OCI-LY7 (cell line): ENCODE measurements at regions of chr1 and their contacts with region 1.

Region 1: DNA sequence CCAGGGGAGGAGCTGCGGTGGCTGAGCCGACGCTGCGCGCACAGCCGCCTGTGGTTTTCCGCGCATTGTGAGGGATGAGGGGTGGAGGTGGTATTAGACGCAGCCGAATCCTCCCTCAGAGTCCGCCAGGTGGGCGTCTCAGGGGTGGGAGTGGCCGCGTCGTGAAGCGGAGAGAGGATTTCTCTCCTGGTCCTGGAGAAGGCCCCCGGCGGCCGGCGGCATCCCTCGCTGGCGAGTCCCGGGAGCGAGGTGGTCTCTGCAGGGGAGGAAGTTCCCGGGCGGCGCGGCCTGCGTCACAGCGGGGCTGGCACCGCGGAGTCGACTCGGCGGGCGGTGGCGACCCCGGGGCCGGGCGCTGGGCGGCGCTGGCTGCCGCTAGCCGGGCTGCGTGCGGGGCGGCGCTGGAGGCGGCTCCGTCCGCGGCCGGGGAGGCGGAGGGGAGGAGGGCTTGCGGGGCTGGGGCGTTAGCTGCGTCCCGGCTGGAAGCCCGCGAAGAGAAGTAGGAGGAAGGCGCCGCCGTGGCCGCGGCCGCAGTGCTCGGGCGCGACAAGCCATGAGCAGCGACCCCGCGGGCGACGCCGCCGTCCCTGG is at the start of gene LRRC8C:
- DNase-seq: peak; percentile 86
- H3K4me3 ChIP-seq: peak within 1 kb of the TSS; percentile 95
- H3K27ac ChIP-seq: peak within 1 kb of the TSS; percentile 56
- H3K4me1 ChIP-seq: peaks cover 25% of the 10 kb centered on the region
- CTCF ChIP-seq: peak; percentile 57; the same call in 1 of the 2 replicates
- total RNA-seq, gene LRRC8C: 4.1 and 6.0 TPM in 2 replicates

Region 2: DNA sequence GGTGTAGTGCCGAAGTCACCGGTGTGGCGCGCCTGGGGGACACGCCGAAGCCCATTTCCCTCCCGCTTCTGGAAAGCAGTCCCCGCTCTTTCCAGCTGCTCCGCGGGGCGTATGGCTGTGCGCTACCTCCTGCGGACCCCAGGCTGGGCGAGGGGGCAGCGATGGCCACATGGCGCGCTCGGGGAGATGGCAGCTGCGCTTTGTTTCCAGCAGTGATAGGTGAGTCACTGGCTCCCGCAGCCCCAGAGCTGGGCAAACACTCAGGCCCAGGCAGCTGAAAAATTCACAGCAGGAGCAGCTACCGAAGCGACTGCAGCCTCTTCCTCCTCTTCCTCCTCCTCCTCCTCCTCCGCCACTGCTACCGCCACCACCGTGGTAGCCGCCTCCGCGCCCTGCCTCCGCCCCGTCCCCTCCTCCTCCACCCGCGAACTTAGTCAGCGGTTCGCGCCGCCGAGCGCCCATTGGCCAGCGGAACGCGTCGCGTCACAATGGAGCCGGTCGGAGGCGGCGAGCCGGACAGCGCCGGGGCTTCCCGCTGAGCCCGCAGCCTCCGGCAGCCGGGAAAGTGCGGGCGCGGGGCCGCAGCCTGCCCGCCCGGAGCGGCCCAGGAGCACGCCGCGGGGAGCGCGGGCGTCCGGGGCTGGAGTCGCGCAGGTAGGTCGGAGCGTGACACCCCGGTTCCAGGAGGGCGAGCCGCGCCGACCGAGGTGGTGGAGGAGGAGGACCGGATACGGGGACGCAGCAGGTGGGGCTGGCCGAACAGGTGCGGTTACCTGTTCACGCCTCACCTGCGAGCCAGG is 108.2 kb before region 1 on chr1 and contains the start of gene LRRC8B:
- CTCF ChIA-PET with region 1: no interaction called
- POLR2A ChIA-PET with region 1: interaction called, 3 read pairs
- intact Hi-C with region 1: loop called (anchors 2 kb)
- DNase-seq: peak; percentile 85
- H3K4me3 ChIP-seq: peak within 1 kb of the TSS; percentile 87
- H3K27ac ChIP-seq: peak within 1 kb of the TSS; percentile 65
- H3K4me1 ChIP-seq: peaks cover 44% of the 10 kb centered on the region
- CTCF ChIP-seq: no peak
- total RNA-seq, gene LRRC8B: 3.2 and 4.4 TPM in 2 replicates

Region 3: GRCh38 chr1:89589515-89589914 is 43.2 kb before region 1 on chr1:
- CTCF ChIA-PET with region 1: no interaction called
- POLR2A ChIA-PET with region 1: no interaction called
- intact Hi-C with region 1: no loop called
- DNase-seq: no peak
- H3K4me3 ChIP-seq: no peak overlapping the region
- H3K27ac ChIP-seq: no peak overlapping the region
- H3K4me1 ChIP-seq: no peaks in the 10 kb centered on the region
- CTCF ChIP-seq: no peak

Region 4: GRCh38 chr1:89706700-89707012 is 73.9 kb after region 1 on chr1:
- CTCF ChIA-PET with region 1: interaction called, 3 read pairs
- POLR2A ChIA-PET with region 1: no interaction called
- intact Hi-C with region 1: loop called (anchors 2 kb)
- DNase-seq: peak; percentile 46
- H3K4me3 ChIP-seq: peak overlapping the region; percentile 44
- H3K27ac ChIP-seq: peak overlapping the region; percentile 84
- H3K4me1 ChIP-seq: peaks cover 41% of the 10 kb centered on the region
- CTCF ChIP-seq: no peak

Region 5: DNA sequence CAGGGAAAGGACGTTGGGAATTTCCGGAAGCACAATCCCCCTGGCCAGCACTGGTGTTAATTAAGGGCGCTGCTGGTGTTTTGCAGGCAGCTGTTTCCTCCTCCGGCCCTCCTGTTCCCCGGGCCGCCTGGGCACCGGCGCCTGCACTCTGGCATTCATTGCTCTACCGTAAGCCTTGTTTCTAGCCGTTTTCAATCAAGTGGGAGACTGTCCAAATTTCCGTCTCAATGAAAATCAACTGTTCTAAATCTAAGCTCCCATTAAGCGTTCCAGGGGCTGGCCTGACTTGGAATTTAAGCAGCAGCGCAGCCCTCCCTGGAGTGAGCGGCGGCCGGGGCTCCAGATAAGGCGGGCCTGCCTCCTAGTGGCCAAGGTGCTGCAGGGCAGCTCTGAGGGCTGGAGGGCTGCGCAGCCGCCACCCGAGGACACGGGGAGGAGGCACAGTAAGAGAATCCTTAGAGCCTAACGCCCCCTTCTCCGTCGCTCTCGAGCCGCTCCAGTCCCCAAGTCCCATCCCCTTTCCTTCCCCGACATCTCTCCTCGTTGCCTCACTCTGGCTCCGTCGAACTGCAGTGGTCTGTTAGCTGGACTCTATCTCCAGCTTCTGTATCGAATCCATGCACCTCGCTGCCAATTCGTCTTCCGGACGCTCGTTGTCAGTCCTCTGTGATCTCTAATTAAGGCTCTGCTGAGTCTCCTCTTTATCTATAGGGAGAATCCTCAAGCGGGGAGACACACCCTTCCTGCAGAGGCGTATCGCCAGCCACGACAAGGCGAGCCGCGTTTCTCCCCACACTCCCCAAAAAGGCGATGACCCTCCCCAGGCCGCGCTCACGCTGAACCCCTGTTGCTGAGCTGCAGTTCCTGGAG is 130.3 kb after region 1 on chr1:
- CTCF ChIA-PET with region 1: interaction called, 7 read pairs
- POLR2A ChIA-PET with region 1: interaction called, 90 read pairs
- intact Hi-C with region 1: loop called (anchors 1 kb)
- DNase-seq: peak; percentile 87
- H3K4me3 ChIP-seq: peak overlapping the region; percentile 37
- H3K27ac ChIP-seq: no peak overlapping the region
- H3K4me1 ChIP-seq: peaks cover 16% of the 10 kb centered on the region
- CTCF ChIP-seq: peak; percentile 96

Region 6: DNA sequence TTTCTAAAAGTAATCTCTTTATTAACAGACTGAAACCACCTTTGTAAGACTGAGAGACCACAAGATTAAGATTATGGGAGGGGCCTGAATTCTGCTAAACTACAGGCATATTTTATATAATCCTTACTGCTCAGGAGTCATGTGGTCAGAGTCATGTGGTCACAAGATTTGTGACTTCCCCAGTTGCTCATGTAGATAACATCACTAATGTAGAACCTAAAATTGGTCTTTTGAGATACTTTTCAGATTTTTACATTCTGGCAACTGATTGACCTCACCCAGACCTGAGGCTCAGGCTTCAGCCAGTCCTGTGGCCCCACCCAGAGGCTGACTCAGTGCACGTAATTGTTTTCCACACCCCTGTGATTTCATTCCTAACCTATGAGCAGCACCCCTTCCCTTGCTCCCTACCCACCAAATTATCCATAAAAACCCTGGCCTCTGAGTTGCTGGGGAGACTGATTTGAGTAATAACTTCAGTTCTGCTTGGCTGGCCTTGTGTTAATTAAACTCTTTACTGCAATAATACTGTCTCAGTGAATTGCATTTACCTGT is 320.4 kb after region 1 on chr1:
- CTCF ChIA-PET with region 1: no interaction called
- POLR2A ChIA-PET with region 1: no interaction called
- intact Hi-C with region 1: no loop called
- DNase-seq: peak; percentile 38
- H3K4me3 ChIP-seq: no peak overlapping the region
- H3K27ac ChIP-seq: no peak overlapping the region
- H3K4me1 ChIP-seq: peaks cover 10% of the 10 kb centered on the region
- CTCF ChIP-seq: peak; percentile 68

Region 7: DNA sequence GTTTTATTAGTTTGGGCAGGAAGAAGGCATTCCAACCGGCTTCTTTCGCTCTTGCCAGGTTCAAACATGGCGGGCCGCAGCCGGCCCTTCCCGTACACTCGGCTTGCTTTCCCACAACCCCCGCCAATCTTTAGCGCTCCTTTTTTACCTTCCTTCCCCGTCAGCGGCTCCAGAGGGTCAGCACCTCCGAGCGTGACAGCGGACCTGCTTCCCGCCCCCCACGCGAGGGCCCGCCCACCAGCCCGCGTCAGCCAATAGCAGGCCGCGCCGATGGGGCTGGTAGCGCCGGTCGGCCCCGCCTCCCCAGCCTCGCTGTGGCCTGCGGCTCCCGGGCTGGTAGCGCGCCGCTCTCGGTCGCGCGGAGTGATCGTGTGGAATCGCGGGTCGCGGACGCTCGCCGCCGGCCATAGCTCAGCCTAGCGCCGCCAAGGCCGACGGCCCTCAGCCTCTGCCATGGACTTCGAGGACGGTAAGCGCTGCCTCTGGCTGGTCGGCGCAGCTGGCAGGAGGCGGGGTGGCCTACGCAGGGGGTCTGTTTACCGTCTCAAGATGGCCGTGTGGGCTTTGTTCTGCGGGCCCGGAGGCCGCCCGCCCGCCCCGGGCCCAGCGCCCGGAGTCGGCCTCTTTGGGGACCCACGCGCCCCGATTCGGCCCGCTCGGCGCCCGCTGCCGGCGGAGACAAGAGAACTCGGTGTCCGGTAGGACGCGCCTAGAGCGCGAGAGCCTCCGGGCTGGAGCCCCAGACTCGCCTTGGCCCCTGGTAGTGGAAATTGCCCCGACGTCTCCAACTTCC is 362.2 kb after region 1 on chr1 and contains the start of gene ZNF326:
- CTCF ChIA-PET with region 1: no interaction called
- POLR2A ChIA-PET with region 1: no interaction called
- intact Hi-C with region 1: loop called (anchors 2 kb)
- DNase-seq: peak; percentile 94
- H3K4me3 ChIP-seq: peak within 1 kb of the TSS; percentile 90
- H3K27ac ChIP-seq: peak within 1 kb of the TSS; percentile 67
- H3K4me1 ChIP-seq: peaks cover 28% of the 10 kb centered on the region
- CTCF ChIP-seq: no peak
- total RNA-seq, gene ZNF326: 10.5 and 11.5 TPM in 2 replicates